ENCODE measurements at regions of chr16 and their contacts with region 1.

Region 1: GRCh38 chr16:67935402-67936123 is 1.1 kb downstream of the PSMB10 start:
- DNase-seq: peak; percentile 92
- H3K4me3 Mint-ChIP-seq: peak overlapping the region; percentile 98
- H3K27ac Mint-ChIP-seq: peak overlapping the region; percentile 96
- H3K4me1 Mint-ChIP-seq: peaks cover 37% of the 10 kb centered on the region
- H3K27me3 Mint-ChIP-seq: no peaks in the 10 kb centered on the region

Region 2: DNA sequence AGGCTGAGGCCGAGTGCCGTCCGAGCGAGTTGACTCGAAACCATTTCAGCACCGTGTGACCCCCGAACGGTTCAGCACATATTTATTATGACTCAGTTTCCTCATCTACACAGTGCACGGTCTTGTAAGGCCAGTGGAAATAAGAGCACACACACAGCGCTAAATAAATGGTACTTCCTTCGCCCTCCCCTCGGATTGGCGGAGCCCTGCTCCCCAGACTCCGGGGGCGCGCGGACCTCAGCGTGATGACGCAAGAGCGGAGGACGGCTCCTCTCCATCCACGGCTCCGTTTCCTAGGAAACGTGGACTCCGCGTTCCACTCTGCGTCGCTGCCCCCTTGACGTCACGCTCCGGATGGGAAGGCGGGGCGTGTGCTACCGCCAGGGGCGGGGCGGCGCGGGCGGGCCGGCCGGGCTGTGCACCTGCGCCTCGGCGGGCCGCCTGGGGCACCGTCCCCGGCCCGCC is 275.0 kb before region 1 on chr16 and contains the start of gene PARD6A:
- intact Hi-C with region 1: loop called (anchors 1 kb)
- DNase-seq: peak; percentile 96
- H3K4me3 Mint-ChIP-seq: peak within 1 kb of the TSS; percentile 92
- H3K27ac Mint-ChIP-seq: peak within 1 kb of the TSS; percentile 97
- H3K4me1 Mint-ChIP-seq: peaks cover 20% of the 10 kb centered on the region
- H3K27me3 Mint-ChIP-seq: no peaks in the 10 kb centered on the region
- total RNA-seq, gene PARD6A: 13.4 and 16.1 TPM in 2 replicates

Region 3: GRCh38 chr16:67892899-67893742 is 42.4 kb before region 1 on chr16 and contains the start of gene PSKH1:
- intact Hi-C with region 1: loop called (anchors 1 kb)
- DNase-seq: peak; percentile 88
- H3K4me3 Mint-ChIP-seq: peak within 1 kb of the TSS; percentile 98
- H3K27ac Mint-ChIP-seq: peak within 1 kb of the TSS; percentile 96
- H3K4me1 Mint-ChIP-seq: peaks cover 20% of the 10 kb centered on the region
- H3K27me3 Mint-ChIP-seq: no peaks in the 10 kb centered on the region
- total RNA-seq, gene PSKH1: 17.8 TPM in 2 replicates

Region 4: DNA sequence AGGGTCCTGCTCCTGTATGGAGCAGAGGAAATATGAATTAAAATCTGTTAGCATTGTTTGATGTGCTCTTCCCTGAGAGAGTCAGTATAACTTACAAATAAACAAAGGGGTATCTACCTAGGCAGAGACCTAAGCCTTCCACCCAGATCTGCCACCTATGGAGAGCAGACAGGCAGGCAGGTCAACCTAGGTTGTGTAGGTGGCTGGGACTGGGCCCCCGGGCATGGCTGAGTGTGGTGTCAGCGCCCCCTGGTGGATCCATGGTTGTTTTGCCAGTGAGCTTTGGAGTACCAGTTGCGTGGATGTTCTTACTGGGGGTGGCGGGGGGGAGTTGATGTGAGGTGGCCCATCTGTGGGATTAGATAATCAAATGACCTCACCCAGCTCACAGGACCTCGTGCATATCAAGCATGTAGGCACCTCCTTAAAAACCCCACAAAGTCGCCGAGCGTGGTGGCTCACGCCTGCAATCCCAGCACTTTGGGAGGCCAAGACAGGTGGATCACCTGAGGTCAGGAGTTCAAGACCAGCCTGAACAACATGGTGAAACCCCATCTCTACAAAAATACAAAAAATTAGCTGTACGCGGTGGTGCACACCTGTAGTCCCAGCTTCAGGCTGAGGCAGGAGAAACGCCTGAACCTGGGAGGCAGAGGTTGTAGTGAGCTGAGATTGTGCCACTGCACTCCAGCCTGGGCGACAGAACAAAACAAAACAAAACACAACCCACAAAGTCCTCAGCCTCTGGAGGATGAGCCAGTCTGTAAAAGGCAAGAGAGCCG is 105.1 kb after region 1 on chr16:
- intact Hi-C with region 1: loop called (anchors 1 kb)
- DNase-seq: peak; percentile 81
- H3K4me3 Mint-ChIP-seq: no peak overlapping the region
- H3K27ac Mint-ChIP-seq: peak overlapping the region; percentile 70
- H3K4me1 Mint-ChIP-seq: peaks cover 19% of the 10 kb centered on the region
- H3K27me3 Mint-ChIP-seq: no peaks in the 10 kb centered on the region

Region 5: DNA sequence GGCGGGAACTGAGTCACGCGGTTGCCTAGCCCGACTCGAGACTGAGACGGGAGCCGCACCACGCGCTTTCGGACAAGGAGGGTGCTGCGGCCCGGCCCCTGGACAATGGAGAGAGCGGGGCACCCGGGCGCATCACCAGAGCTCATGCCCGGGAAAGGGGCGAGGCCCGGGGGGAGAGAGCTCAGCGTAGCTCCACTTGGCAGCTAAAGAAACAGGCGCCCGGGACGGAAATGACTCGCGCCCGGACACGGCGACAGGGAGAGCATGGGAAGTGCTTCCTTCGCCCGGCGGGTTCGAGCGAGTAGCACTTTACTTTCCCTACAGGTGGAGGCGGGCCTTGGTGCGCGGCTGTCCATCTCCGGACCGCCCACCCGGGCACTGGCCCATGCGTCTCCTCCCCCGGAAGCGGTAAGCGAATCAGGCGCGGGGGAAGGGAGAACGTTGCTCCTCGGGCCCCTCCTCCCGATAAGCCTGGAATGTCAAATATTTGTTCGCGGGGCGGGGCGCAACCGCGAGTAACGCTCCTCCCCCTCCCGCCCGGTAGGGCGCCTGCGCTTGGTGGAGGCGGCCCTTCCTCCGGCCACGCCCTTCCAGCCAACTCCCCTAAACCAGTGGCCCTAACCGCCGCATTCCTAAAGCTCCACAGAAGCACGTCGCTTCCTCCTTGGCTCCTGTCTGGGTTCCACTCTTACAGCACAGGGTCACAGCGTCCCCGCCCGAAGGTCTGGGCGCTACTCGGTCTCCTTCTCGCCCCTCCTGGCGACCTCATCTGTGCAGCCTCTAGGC is 301.9 kb after region 1 on chr16:
- intact Hi-C with region 1: loop called (anchors 5 kb)
- DNase-seq: peak; percentile 84
- H3K4me3 Mint-ChIP-seq: peak overlapping the region; percentile 84
- H3K27ac Mint-ChIP-seq: peak overlapping the region; percentile 59
- H3K4me1 Mint-ChIP-seq: peaks cover 26% of the 10 kb centered on the region
- H3K27me3 Mint-ChIP-seq: peaks cover 5% of the 10 kb centered on the region

Measured in activated T-helper 1 cell treated with anti-CD3 and anti-CD28 coated beads, Interleukin-12 subunit alpha, Interleukin-12 subunit beta, Interleukin-2, Interleukin-4 antibody, amounts not matched to agents 30 ng/mL and 10 ng/mL and 1 ng/mL, durations not matched to agents 14 hours and 24 hours and 36 hours (primary cell).